ENCODE measurements at regions of chr4 and their contacts with region 1.

Region 1: GRCh38 chr4:183471946-183472708 is 27.7 kb downstream of the CDKN2AIP start:
- DNase-seq: peak; percentile 93
- H3K4me3 Mint-ChIP-seq: no peak overlapping the region
- H3K27ac Mint-ChIP-seq: no peak overlapping the region
- H3K4me1 Mint-ChIP-seq: peaks cover 2% of the 10 kb centered on the region
- H3K27me3 Mint-ChIP-seq: no peaks in the 10 kb centered on the region

Region 2: DNA sequence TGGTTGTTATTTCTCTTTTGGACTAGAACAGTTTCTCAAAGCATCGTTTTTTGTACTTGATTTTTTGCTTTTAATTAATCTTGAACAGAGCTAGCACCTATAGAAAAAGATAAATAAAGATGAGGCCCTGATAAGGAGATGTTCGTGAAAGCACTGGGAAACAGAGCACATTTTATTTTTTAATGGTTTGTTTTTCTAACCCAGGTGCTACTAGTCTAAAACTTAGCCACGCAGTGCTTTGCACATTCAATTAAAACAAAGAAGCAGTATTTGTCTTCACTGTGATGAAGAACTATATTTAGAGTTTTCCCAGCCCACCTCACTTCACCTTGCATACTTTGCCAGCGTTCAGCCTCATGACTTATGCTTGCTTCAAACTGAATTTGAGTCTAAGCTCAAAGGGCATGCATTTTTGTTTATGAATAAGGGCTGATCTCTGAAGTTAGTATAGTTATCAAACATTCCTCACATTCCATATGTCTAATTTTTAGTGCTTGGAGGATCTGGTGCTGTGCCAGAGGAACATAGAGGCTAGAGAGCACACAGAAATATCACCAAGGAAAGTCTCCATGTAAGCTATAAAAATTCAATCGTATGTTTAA is 296.4 kb before region 1 on chr4:
- intact Hi-C with region 1: no loop called
- DNase-seq: no peak
- H3K4me3 Mint-ChIP-seq: no peak overlapping the region
- H3K27ac Mint-ChIP-seq: no peak overlapping the region
- H3K4me1 Mint-ChIP-seq: no peaks in the 10 kb centered on the region
- H3K27me3 Mint-ChIP-seq: peaks cover 44% of the 10 kb centered on the region

Region 3: GRCh38 chr4:183602557-183603027 is 130.5 kb after region 1 on chr4:
- intact Hi-C with region 1: loop called (anchors 1 kb)
- DNase-seq: no peak
- H3K4me3 Mint-ChIP-seq: no peak overlapping the region
- H3K27ac Mint-ChIP-seq: no peak overlapping the region
- H3K4me1 Mint-ChIP-seq: peaks cover 2% of the 10 kb centered on the region
- H3K27me3 Mint-ChIP-seq: peaks cover 8% of the 10 kb centered on the region

Region 4: GRCh38 chr4:183722731-183723560 is 250.8 kb after region 1 on chr4:
- intact Hi-C with region 1: loop called (anchors 2 kb)
- DNase-seq: peak; percentile 84
- H3K4me3 Mint-ChIP-seq: peak overlapping the region; percentile 80
- H3K27ac Mint-ChIP-seq: peak overlapping the region; percentile 58
- H3K4me1 Mint-ChIP-seq: peaks cover 12% of the 10 kb centered on the region
- H3K27me3 Mint-ChIP-seq: peaks cover 44% of the 10 kb centered on the region

Region 5: DNA sequence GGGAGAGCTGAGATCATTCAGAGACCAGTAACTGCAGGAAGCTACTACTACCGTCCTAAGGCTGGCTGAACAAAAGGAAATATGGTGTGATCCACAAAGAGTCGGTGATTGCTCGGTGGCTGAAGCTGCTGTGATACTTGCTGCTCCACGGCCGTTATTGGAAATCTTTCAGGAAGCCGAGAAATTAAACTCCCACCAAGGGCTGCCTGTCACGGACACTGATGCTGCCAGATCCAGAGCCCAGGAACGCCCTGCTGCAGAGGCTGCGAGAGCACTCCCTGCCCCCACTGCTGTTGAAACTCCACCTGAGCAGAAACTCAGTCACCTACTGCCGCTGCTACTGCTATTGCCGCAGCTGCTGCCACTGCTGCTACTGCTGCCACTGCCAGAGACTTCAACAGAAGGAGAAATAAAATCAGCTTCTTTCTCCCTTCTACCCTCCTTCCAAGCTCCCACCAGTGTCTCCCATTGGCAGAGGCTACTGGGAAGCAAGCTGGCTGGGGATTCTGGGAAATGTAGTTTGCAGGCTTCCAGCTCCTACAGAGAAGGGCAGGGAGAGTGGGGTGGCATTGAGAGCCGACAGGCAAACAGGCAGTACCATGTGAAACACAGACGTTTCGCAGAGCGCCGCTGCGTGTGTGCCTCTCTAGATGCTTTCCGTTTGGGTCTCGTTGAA is 871.5 kb after region 1 on chr4:
- intact Hi-C with region 1: no loop called
- DNase-seq: peak; percentile 82
- H3K4me3 Mint-ChIP-seq: peak overlapping the region; percentile 83
- H3K27ac Mint-ChIP-seq: peak overlapping the region; percentile 78
- H3K4me1 Mint-ChIP-seq: peaks cover 28% of the 10 kb centered on the region
- H3K27me3 Mint-ChIP-seq: no peaks in the 10 kb centered on the region

Measured in activated CD4-positive, alpha-beta T cell treated with anti-CD3 and anti-CD28 coated beads, Interleukin-2, amount 10 ng/mL, durations not matched to agents 24 days and 14 days (primary cell).